ENCODE measurements at regions of chr18 and their contacts with region 1.

Region 1: GRCh38 chr18:3794537-3795348 is 344.8 kb downstream of the TGIF1 start:
- DNase-seq: peak; percentile 97
- H3K4me3 ChIP-seq: no peak overlapping the region
- H3K27ac ChIP-seq: peak overlapping the region; percentile 95
- H3K4me1 ChIP-seq: peaks cover 34% of the 10 kb centered on the region
- H3K27me3 ChIP-seq: no peaks in the 10 kb centered on the region
- CTCF ChIP-seq: peak in 1 of 2 donors; percentile 6
- POLR2A ChIP-seq: no peak

Region 2: GRCh38 chr18:3261371-3262246 is 533.1 kb before region 1 on chr18 and contains the start of gene MYL12B:
- CTCF ChIA-PET with region 1: no interaction called
- POLR2A ChIA-PET with region 1: no interaction called
- dilution Hi-C with region 1: no loop called
- intact Hi-C with region 1: loop called (anchors 5 kb)
- DNase-seq: peak; percentile 80
- H3K4me3 ChIP-seq: peak within 1 kb of the TSS; percentile 93 to 100 (median 97)
- H3K27ac ChIP-seq: peak within 1 kb of the TSS; percentile 94
- H3K4me1 ChIP-seq: peaks cover 36% of the 10 kb centered on the region
- H3K27me3 ChIP-seq: no peaks in the 10 kb centered on the region
- CTCF ChIP-seq: no peak
- POLR2A ChIP-seq: peak; percentile 75
- total RNA-seq, gene MYL12B: 634 and 638 TPM in 2 replicates

Region 3: GRCh38 chr18:3660739-3661515 is 133.8 kb before region 1 on chr18:
- CTCF ChIA-PET with region 1: interaction called, 5 read pairs
- POLR2A ChIA-PET with region 1: interaction called, 11 read pairs
- dilution Hi-C with region 1: no loop called
- intact Hi-C with region 1: no loop called
- DNase-seq: no peak
- H3K4me3 ChIP-seq: no peak overlapping the region
- H3K27ac ChIP-seq: no peak overlapping the region
- H3K4me1 ChIP-seq: peaks cover 15% of the 10 kb centered on the region
- H3K27me3 ChIP-seq: no peaks in the 10 kb centered on the region
- CTCF ChIP-seq: no peak
- POLR2A ChIP-seq: no peak

Region 4: GRCh38 chr18:3710712-3711269 is 84.0 kb before region 1 on chr18:
- CTCF ChIA-PET with region 1: interaction called, 5 read pairs
- POLR2A ChIA-PET with region 1: interaction called, 9 read pairs
- dilution Hi-C with region 1: no loop called
- intact Hi-C with region 1: loop called (anchors 1 kb)
- DNase-seq: peak; percentile 96
- H3K4me3 ChIP-seq: no peak overlapping the region
- H3K27ac ChIP-seq: peak overlapping the region; percentile 90
- H3K4me1 ChIP-seq: peaks cover 27% of the 10 kb centered on the region
- H3K27me3 ChIP-seq: no peaks in the 10 kb centered on the region
- CTCF ChIP-seq: no peak
- POLR2A ChIP-seq: peak; percentile 93

Region 5: GRCh38 chr18:3747176-3747973 is 47.4 kb before region 1 on chr18:
- CTCF ChIA-PET with region 1: interaction called, 3 read pairs
- POLR2A ChIA-PET with region 1: interaction called, 3 read pairs
- dilution Hi-C with region 1: no loop called
- intact Hi-C with region 1: loop called (anchors 1 kb)
- DNase-seq: peak; percentile 90
- H3K4me3 ChIP-seq: peak overlapping the region in 2 of 3 experiments; percentile 4 to 44
- H3K27ac ChIP-seq: peak overlapping the region; percentile 87
- H3K4me1 ChIP-seq: peaks cover 25% of the 10 kb centered on the region
- H3K27me3 ChIP-seq: no peaks in the 10 kb centered on the region
- CTCF ChIP-seq: no peak
- POLR2A ChIP-seq: no peak

Region 6: DNA sequence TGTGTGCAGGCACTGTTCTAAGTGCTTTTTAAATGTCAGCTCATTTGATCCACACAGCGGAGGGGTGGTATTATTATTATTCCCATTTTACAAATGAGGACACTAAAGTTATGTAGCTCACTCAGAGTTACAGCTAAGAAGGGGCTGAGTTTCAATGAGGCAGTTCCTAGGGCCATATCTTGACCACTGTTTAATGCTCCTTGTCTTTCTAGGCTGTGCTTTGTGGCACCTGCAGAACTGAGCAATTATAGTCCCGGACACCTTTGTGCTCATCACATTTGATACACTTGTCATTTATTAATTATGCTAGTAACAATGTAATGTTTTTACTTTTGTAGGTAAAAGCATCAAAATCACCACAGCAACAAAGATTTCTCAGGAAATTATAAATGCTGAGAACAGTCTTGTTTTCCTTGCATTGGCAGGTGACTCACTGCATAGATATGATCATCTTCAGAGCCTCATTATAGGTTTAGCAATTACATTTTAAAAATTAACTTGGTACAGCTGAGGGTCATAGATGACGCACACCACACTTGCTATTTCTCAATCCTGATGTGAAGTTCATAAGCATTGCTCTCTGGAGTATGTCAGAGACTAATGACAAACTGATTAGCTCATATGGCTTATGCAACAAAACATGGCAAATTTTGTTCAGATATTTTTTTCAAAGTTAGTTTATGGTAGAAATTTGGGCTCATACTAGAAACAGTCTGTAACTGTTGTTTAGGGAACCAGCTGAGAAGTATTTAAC is 22.0 kb after region 1 on chr18:
- CTCF ChIA-PET with region 1: no interaction called
- POLR2A ChIA-PET with region 1: no interaction called
- dilution Hi-C with region 1: no loop called
- intact Hi-C with region 1: loop called (anchors 2 kb)
- DNase-seq: peak; percentile 64
- H3K4me3 ChIP-seq: no peak overlapping the region
- H3K27ac ChIP-seq: no peak overlapping the region
- H3K4me1 ChIP-seq: peaks cover 6% of the 10 kb centered on the region
- H3K27me3 ChIP-seq: no peaks in the 10 kb centered on the region
- CTCF ChIP-seq: no peak
- POLR2A ChIP-seq: no peak

Region 7: GRCh38 chr18:3857544-3857943 is 62.8 kb after region 1 on chr18:
- CTCF ChIA-PET with region 1: no interaction called
- POLR2A ChIA-PET with region 1: no interaction called
- dilution Hi-C with region 1: no loop called
- intact Hi-C with region 1: no loop called
- DNase-seq: no peak
- H3K4me3 ChIP-seq: no peak overlapping the region
- H3K27ac ChIP-seq: no peak overlapping the region
- H3K4me1 ChIP-seq: no peaks in the 10 kb centered on the region
- H3K27me3 ChIP-seq: no peaks in the 10 kb centered on the region
- CTCF ChIP-seq: no peak
- POLR2A ChIP-seq: no peak

Region 8: GRCh38 chr18:3985664-3986063 is 190.9 kb after region 1 on chr18:
- CTCF ChIA-PET with region 1: no interaction called
- POLR2A ChIA-PET with region 1: no interaction called
- dilution Hi-C with region 1: no loop called
- intact Hi-C with region 1: no loop called
- DNase-seq: no peak
- H3K4me3 ChIP-seq: no peak overlapping the region
- H3K27ac ChIP-seq: no peak overlapping the region
- H3K4me1 ChIP-seq: no peaks in the 10 kb centered on the region
- H3K27me3 ChIP-seq: no peaks in the 10 kb centered on the region
- CTCF ChIP-seq: no peak
- POLR2A ChIP-seq: no peak

Measured in endothelial cell of umbilical vein (primary cell).